Posterior cingulate gyrus (tissue), 11 donors: ENCODE measurements at regions of chr4 and their contacts with region 1.

Region 1: GRCh38 chr4:41214136-41214824 is at the start of gene APBB2:
- DNase-seq: peak; percentile 90 to 99 (median 94)

Region 2: DNA sequence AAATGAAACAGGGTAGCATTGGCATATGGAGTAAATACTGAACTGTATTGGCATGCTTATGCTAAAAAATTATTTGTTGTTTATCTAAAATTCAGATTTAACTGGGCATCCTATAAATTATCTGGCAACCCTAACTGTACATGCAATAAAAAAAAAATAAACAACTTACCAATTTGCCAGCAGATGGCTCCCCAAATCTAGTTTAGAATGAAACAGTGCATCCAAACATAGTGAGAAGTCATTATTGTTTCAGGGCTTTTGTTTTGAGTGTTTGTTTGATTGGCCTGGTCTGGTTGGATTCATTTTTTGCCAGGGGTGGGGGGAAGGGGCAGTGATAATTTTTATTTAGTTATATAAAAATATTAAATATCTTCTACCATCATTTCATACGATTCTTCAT is 477.4 kb before region 1 on chr4:
- intact Hi-C with region 1: loop called (anchors 5 kb)
- DNase-seq: no peak

Region 3: GRCh38 chr4:40924096-40924792 is 290.0 kb before region 1 on chr4:
- intact Hi-C with region 1: loop called (anchors 1 kb)
- DNase-seq: peak in 9 of 10 donors; percentile 58 to 95 (median 73)

Region 4: DNA sequence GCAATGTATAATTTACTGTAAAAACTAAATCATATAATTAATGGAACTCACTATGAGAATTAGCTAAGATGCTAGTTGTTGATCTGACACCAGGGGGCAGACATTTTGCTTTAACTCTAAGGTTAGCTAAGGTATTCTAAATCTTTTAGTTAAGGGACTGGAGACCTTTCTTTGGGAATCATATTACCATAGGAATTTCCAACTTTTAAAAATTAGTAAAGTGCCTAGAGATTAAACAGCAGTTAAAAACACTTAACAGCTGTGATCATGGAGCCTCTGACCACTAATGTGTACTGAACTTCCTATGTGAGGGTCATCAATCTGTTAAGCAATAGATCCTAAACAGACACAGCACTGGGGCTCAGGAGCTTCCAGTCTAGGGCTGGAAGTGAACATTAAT is 237.9 kb before region 1 on chr4:
- intact Hi-C with region 1: loop called (anchors 1 kb)
- DNase-seq: no peak

Region 5: DNA sequence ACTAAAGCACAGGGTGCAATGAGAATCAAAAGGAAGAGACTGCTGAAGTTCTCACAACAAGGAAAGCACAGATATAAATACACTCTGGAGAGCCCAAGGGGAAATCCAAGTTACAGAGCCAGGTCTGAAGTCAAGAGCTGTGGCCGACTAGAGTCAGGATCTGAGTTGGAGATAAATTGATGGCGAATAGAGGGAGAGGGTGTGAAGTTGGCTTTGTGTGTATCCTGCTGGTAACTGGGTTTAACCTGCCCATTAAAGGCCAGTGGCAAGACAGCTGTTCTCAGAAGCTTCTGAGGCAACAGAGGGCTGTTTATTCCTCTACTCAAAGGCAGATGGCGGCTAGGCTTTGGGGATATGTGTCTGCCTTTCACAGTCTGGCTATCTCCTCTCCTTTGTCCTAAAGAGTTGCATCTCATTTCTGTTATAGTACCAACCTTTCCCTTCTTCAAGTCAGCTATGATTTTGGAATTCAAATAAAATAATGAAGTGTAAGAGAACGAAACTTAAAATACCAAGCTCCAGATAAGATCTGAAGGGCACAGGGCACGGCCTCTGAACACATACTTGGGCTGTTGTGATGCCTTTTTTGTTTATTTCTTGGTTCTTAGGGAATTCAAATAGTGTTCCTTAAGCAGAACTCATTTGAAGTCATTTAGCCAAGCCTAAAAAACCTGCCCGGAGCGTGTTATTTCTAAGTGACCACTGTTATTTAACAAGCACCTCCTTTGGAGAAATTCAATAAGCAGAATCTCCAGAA is 142.1 kb before region 1 on chr4:
- intact Hi-C with region 1: loop called (anchors 5 kb)
- DNase-seq: peak in 3 of 10 donors; percentile 37 to 79 (median 38)

Region 6: DNA sequence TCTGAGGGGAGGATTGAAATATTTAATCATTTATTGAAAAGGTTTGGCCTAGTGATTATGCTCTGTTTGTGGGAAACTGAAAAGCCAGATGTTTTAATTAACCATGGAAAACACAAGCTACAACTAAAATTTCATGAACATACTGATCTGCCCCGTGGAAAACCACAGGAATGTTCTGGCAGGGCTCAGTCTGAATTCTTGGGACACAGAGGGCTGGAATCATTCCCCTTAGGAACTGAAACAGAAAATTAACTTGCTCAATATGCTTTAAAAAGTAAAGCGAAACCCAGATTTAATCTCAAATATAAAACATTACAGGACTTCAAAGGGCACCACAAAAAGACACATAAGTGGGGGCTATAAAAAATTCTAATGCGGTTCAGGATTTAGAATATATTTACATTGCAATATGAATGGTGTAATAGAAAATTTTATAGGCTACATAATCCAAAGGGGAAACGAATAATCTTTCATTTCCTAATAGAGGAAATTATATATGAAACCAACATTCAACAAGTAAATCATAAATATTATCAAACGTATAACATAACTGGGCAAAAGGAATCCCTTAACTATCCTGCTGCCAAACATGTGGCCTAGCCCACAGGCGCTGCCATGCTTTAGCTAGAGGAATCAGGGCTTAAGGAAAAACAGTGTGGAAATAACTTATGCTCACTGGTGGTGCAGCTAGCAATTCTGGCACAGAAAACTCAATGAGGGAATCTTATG is 70.8 kb before region 1 on chr4:
- intact Hi-C with region 1: loop called (anchors 5 kb)
- DNase-seq: no peak

Region 7: GRCh38 chr4:41257257-41257901 is 43.1 kb after region 1 on chr4:
- intact Hi-C with region 1: loop called (anchors 5 kb)
- DNase-seq: peak; percentile 34 to 95 (median 64)